CD14-positive monocyte (primary cell): ENCODE measurements at regions of chr14 and their contacts with region 1.

Region 1: GRCh38 chr14:100192672-100193416 is 33.4 kb upstream of the DEGS2 start:
- DNase-seq: peak; percentile 98 to 99 (median 99)
- H3K4me3 ChIP-seq: peak overlapping the region; percentile 36 to 70 (median 64)
- H3K4me3 Mint-ChIP-seq: peak overlapping the region; percentile 81 to 88
- H3K27ac ChIP-seq: peak overlapping the region; percentile 73 to 94
- H3K27ac Mint-ChIP-seq: peak overlapping the region; percentile 85 to 95 (median 91)
- H3K4me1 ChIP-seq: peaks cover 13 to 24% of the 10 kb centered on the region in 2 donors
- H3K4me1 Mint-ChIP-seq: peaks cover 12% of the 10 kb centered on the region
- H3K27me3 ChIP-seq: no peaks in the 10 kb centered on the region
- H3K27me3 Mint-ChIP-seq: no peaks in the 10 kb centered on the region
- CTCF ChIP-seq: peak; percentile 94

Region 2: DNA sequence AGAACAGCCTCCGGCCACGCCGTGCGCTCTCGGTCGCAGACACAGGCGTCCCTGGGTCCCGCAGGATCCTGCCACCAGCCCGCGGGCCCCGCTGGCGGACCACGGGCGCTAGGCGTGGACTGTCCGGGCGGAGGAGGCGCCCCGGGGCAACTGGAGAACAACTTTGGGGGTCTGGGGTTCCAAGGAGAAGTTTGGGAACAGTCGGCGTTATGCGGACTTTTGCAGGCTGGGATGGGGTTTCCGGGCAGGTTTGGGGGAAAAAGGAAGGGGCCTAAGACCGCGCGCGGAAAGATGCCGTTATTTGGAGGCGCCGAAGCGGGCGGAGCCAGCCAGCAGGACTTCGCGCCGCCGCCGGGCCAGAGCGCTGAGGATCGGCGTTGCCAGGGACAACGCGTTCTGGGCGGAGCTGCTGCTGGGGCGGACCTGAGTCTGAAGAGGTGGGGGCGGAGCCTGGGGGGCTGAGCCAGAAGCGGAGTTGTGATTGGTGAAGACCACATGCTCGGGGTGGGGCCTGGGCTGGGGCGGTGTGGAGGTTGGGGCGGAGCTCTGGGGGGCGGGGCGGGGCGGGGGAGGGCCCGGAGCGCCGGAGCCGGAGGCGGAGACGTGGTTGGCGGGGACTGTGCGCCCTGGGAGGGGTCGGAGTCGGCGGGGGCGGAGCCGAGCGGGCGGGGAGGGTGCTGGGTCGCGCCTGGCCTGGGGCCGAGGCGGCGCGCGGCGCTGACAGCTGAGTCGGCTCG is 509.1 kb before region 1 on chr14 and contains the start of gene CYP46A1:
- intact Hi-C with region 1: loop called in 1 of 2 experiments (anchors 10 kb)
- DNase-seq: peak; percentile 97 to 99 (median 98)
- H3K4me3 ChIP-seq: peak within 1 kb of the TSS; percentile 41 to 85 (median 62)
- H3K4me3 Mint-ChIP-seq: peak within 1 kb of the TSS; percentile 89
- H3K27ac ChIP-seq: peak within 1 kb of the TSS; percentile 39 to 66
- H3K27ac Mint-ChIP-seq: peak within 1 kb of the TSS; percentile 42 to 94 (median 84)
- H3K4me1 ChIP-seq: peaks cover 15 to 20% of the 10 kb centered on the region in 2 donors
- H3K4me1 Mint-ChIP-seq: peaks cover 19% of the 10 kb centered on the region
- H3K27me3 ChIP-seq: peaks cover 8 to 21% of the 10 kb centered on the region in 2 donors
- H3K27me3 Mint-ChIP-seq: peaks cover 41 to 59% (median 42%) of the 10 kb centered on the region in 3 donors
- CTCF ChIP-seq: no peak
- polyA plus RNA-seq, gene CYP46A1: not detected

Region 3: GRCh38 chr14:99982537-99983250 is 210.2 kb before region 1 on chr14:
- intact Hi-C with region 1: loop called (anchors 2 to 5 kb)
- DNase-seq: peak; percentile 50 to 61 (median 57)
- H3K4me3 ChIP-seq: no peak overlapping the region
- H3K4me3 Mint-ChIP-seq: no peak overlapping the region
- H3K27ac ChIP-seq: no peak overlapping the region
- H3K27ac Mint-ChIP-seq: no peak overlapping the region
- H3K4me1 ChIP-seq: peaks cover 0 to 7% of the 10 kb centered on the region in 2 donors
- H3K4me1 Mint-ChIP-seq: peaks cover 13% of the 10 kb centered on the region
- H3K27me3 ChIP-seq: no peaks in the 10 kb centered on the region
- H3K27me3 Mint-ChIP-seq: peaks cover 0 to 2% (median 1%) of the 10 kb centered on the region in 3 donors
- CTCF ChIP-seq: peak; percentile 95

Region 4: GRCh38 chr14:100067971-100068959 is 124.6 kb before region 1 on chr14:
- intact Hi-C with region 1: loop called in 1 of 2 experiments (anchors 2 kb)
- DNase-seq: peak; percentile 84 to 91 (median 90)
- H3K4me3 ChIP-seq: peak overlapping the region; percentile 23 to 68 (median 23)
- H3K4me3 Mint-ChIP-seq: peak overlapping the region; percentile 78 to 97
- H3K27ac ChIP-seq: peak overlapping the region; percentile 90 to 95
- H3K27ac Mint-ChIP-seq: peak overlapping the region; percentile 90 to 99 (median 98)
- H3K4me1 ChIP-seq: peaks cover 66 to 78% of the 10 kb centered on the region in 2 donors
- H3K4me1 Mint-ChIP-seq: peaks cover 72% of the 10 kb centered on the region
- H3K27me3 ChIP-seq: no peaks in the 10 kb centered on the region
- H3K27me3 Mint-ChIP-seq: peaks cover 0 to under 1% (median 0%) of the 10 kb centered on the region in 3 donors
- CTCF ChIP-seq: no peak

Region 5: GRCh38 chr14:100239840-100240724 is 47.2 kb after region 1 on chr14:
- intact Hi-C with region 1: loop called in 1 of 2 experiments (anchors 2 kb)
- DNase-seq: peak; percentile 75 to 82 (median 82)
- H3K4me3 ChIP-seq: peak overlapping the region; percentile 85 to 99 (median 95)
- H3K4me3 Mint-ChIP-seq: peak overlapping the region; percentile 84 to 88
- H3K27ac ChIP-seq: peak overlapping the region; percentile 71 to 89
- H3K27ac Mint-ChIP-seq: peak overlapping the region; percentile 87 to 95 (median 88)
- H3K4me1 ChIP-seq: peaks cover 38 to 49% of the 10 kb centered on the region in 2 donors
- H3K4me1 Mint-ChIP-seq: peaks cover 56% of the 10 kb centered on the region
- H3K27me3 ChIP-seq: no peaks in the 10 kb centered on the region
- H3K27me3 Mint-ChIP-seq: no peaks in the 10 kb centered on the region
- CTCF ChIP-seq: peak; percentile 76